CD4-positive, alpha-beta memory T cell (primary cell): ENCODE measurements at regions of chr9 and their contacts with region 1.

Region 1: DNA sequence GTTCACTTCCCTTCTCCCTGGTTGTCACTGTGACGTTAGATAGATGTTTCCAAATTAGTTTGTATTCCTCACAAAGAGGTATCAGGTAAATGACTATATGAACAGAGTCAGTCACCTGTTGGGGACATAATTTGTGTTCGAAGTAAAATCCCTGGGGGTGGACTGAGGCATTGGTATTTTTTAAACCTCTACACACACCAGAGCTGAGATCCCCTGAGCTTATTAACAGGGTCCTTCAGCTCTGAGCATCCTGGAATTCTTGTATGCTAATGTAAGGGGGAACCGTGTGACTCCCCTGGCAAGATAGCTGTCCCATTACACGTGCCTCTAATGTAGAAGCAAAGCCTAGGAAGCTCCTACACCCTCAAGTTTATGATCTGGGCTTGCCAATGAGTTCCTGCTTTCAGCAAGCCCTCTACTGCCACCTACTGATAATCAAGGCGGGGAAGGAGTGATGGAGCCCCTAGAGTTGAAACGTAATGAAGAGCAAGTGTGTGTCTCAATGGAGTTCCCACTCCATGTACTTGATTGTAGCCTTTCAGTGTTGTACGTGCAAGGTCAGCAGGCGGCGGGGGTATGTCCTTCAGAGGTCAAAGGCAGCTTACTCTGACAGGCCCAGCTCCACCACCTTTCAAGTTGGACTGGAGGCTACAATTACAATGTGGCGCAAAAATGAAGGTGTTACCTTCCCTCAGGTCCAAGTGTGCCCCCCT is 14.4 kb downstream of the PRKACG start:
- DNase-seq: peak; percentile 67 to 73 (median 71)
- H3K4me3 ChIP-seq: no peak overlapping the region
- H3K4me3 Mint-ChIP-seq: peak overlapping the region in 1 of 8 donors; percentile 18
- H3K27ac ChIP-seq: no peak overlapping the region
- H3K27ac Mint-ChIP-seq: peak overlapping the region in 1 of 7 donors; percentile 4
- H3K4me1 ChIP-seq: peaks cover 4% of the 10 kb centered on the region
- H3K4me1 Mint-ChIP-seq: peaks cover 6 to 19% (median 11%) of the 10 kb centered on the region in 4 donors
- H3K27me3 ChIP-seq: no peaks in the 10 kb centered on the region
- H3K27me3 Mint-ChIP-seq: peaks cover 0 to 2% of the 10 kb centered on the region in 2 donors

Region 2: DNA sequence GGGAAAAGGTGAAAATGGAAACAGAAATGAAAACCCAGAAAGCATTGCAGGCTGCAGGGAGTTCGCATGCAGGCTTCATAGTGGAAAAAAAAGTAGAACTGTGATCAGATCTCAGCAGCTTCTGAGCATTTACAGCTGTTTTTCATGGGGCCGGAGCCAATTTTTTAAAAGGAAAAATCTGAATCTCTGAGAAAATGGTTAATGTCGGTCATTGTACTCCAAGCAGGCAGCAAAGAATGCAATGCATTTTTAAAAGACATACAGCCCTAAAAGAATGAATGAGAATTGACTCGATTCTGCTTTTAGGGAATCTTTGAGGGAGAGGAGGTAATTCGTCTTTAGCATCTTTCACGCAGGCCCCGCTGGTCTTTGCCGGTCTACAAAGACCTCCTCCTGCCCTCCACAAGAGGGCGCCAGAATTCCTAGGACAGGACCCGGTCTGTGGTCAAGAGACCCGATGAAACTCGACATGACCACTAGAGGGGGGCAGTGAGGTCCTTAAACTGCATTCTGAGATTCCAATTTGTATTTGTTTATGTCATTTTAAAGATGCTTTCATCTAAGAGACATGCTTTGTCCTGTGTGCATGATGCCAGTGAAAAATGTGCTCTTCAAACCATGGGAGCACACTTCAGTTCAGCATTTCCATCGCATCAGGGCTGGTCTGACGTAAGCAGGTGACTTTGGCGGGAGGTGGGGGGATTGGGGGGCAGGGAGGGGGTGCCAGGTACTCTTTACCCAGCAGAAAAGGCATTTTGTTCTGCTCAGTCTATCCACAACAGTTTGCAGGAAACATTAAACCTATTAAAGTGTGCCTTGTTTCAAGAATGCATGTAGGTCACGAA is 415.1 kb before region 1 on chr9:
- CTCF ChIA-PET with region 1: interaction called, 60 read pairs
- POLR2A ChIA-PET with region 1: interaction called, 3 read pairs
- intact Hi-C with region 1: loop called (anchors 1 kb)
- DNase-seq: peak; percentile 78 to 83 (median 82)
- H3K4me3 ChIP-seq: no peak overlapping the region
- H3K4me3 Mint-ChIP-seq: no peak overlapping the region
- H3K27ac ChIP-seq: no peak overlapping the region
- H3K27ac Mint-ChIP-seq: no peak overlapping the region
- H3K4me1 ChIP-seq: no peaks in the 10 kb centered on the region
- H3K4me1 Mint-ChIP-seq: peaks cover 0 to 3% (median 0%) of the 10 kb centered on the region in 4 donors
- H3K27me3 ChIP-seq: no peaks in the 10 kb centered on the region
- H3K27me3 Mint-ChIP-seq: peaks cover 0 to 4% of the 10 kb centered on the region in 2 donors

Region 3: DNA sequence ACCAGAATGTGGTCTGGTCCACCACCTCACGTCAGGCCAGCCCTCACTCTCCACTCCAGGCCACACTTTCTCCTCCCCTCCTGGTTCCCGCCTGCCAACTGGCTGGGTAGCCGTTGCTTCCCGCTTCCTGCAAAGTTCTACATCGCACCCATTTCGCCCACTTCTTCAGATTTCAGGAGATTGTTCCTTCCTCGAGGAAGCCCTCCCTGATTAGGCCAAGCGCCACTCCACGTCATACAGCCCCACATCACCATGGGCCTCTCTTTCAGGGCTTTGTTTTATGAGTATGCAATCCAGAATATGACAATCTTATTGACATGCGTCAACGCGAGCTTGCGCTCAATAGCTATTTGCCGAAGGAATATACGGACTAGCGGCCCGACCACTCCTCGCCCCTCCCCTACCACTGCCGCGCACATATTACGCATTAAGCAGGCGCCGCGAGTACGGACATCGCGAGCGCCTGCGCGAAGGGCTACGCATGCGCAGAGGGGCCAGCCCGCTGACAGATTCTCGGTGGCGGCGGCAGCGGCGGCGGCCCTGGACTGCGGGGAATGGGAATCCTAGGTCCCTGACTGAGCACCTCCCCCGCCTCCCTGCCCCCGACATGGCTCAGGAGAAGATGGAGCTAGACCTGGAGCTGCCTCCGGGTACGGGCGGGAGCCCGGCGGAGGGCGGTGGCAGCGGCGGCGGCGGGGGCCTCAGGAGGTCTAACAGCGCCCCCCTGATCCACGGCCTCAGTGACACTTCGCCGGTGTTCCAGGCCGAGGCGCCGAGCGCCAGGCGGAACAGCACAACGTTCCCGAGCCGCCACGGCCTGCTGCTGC is 219.8 kb before region 1 on chr9:
- CTCF ChIA-PET with region 1: interaction called, 8 read pairs
- POLR2A ChIA-PET with region 1: interaction called, 6 read pairs
- intact Hi-C with region 1: loop called (anchors 1 kb)
- DNase-seq: peak; percentile 94 to 96 (median 94)
- H3K4me3 ChIP-seq: peak overlapping the region; percentile 92 to 100
- H3K4me3 Mint-ChIP-seq: no peak overlapping the region
- H3K27ac ChIP-seq: peak overlapping the region; percentile 85
- H3K27ac Mint-ChIP-seq: no peak overlapping the region
- H3K4me1 ChIP-seq: peaks cover 53% of the 10 kb centered on the region
- H3K4me1 Mint-ChIP-seq: peaks cover 3 to 7% (median 4%) of the 10 kb centered on the region in 4 donors
- H3K27me3 ChIP-seq: no peaks in the 10 kb centered on the region
- H3K27me3 Mint-ChIP-seq: peaks cover 4 to 5% of the 10 kb centered on the region in 2 donors

Region 4: GRCh38 chr9:68895741-68896478 is 103.6 kb before region 1 on chr9:
- CTCF ChIA-PET with region 1: interaction called, 6 read pairs
- POLR2A ChIA-PET with region 1: no interaction called
- intact Hi-C with region 1: loop called (anchors 2 kb)
- DNase-seq: peak in 4 of 5 donors; percentile 28 to 47 (median 39)
- H3K4me3 ChIP-seq: peak overlapping the region in 1 of 2 donors; percentile 10
- H3K4me3 Mint-ChIP-seq: peak overlapping the region; percentile 36 to 83 (median 59)
- H3K27ac ChIP-seq: no peak overlapping the region
- H3K27ac Mint-ChIP-seq: peak overlapping the region; percentile 6 to 92 (median 76)
- H3K4me1 ChIP-seq: peaks cover 34% of the 10 kb centered on the region
- H3K4me1 Mint-ChIP-seq: peaks cover 25 to 45% (median 34%) of the 10 kb centered on the region in 4 donors
- H3K27me3 ChIP-seq: no peaks in the 10 kb centered on the region
- H3K27me3 Mint-ChIP-seq: no peaks in the 10 kb centered on the region

Region 5: DNA sequence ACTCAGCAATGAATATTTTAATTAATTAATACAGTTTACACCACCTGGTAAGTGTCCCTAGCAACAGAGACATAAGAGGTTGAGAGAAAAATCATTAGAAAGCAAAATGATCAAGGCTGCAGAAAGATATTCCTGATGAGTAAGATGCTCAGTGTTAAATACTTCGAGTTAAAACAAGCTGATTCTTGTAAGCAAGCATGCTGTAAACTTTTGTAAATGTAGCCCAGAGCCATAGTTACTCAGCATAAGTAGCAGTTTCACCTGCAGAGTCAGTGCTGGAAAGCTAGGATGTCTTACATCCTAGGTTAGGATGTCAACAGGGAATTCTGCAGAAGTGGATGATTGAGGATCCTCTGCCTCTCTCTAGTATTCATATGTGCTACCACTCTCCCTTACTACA is 10.2 kb after region 1 on chr9:
- CTCF ChIA-PET with region 1: interaction called, 28 read pairs
- POLR2A ChIA-PET with region 1: no interaction called
- intact Hi-C with region 1: no loop called
- DNase-seq: no peak
- H3K4me3 ChIP-seq: no peak overlapping the region
- H3K4me3 Mint-ChIP-seq: no peak overlapping the region
- H3K27ac ChIP-seq: no peak overlapping the region
- H3K27ac Mint-ChIP-seq: no peak overlapping the region
- H3K4me1 ChIP-seq: peaks cover 6% of the 10 kb centered on the region
- H3K4me1 Mint-ChIP-seq: peaks cover 5 to 9% (median 7%) of the 10 kb centered on the region in 4 donors
- H3K27me3 ChIP-seq: no peaks in the 10 kb centered on the region
- H3K27me3 Mint-ChIP-seq: peaks cover 12 to 15% of the 10 kb centered on the region in 2 donors

Region 6: GRCh38 chr9:69019808-69020207 is 20.3 kb after region 1 on chr9:
- CTCF ChIA-PET with region 1: interaction called, 11 read pairs
- POLR2A ChIA-PET with region 1: interaction called, 8 read pairs
- intact Hi-C with region 1: no loop called
- DNase-seq: peak; percentile 62 to 72 (median 66)
- H3K4me3 ChIP-seq: no peak overlapping the region
- H3K4me3 Mint-ChIP-seq: peak overlapping the region in 7 of 8 donors; percentile 46 to 73 (median 56)
- H3K27ac ChIP-seq: peak overlapping the region; percentile 13
- H3K27ac Mint-ChIP-seq: peak overlapping the region; percentile 0 to 68 (median 26)
- H3K4me1 ChIP-seq: peaks cover 24% of the 10 kb centered on the region
- H3K4me1 Mint-ChIP-seq: peaks cover 17 to 35% (median 25%) of the 10 kb centered on the region in 4 donors
- H3K27me3 ChIP-seq: no peaks in the 10 kb centered on the region
- H3K27me3 Mint-ChIP-seq: peaks cover under 1 to 2% of the 10 kb centered on the region in 2 donors

Region 7: DNA sequence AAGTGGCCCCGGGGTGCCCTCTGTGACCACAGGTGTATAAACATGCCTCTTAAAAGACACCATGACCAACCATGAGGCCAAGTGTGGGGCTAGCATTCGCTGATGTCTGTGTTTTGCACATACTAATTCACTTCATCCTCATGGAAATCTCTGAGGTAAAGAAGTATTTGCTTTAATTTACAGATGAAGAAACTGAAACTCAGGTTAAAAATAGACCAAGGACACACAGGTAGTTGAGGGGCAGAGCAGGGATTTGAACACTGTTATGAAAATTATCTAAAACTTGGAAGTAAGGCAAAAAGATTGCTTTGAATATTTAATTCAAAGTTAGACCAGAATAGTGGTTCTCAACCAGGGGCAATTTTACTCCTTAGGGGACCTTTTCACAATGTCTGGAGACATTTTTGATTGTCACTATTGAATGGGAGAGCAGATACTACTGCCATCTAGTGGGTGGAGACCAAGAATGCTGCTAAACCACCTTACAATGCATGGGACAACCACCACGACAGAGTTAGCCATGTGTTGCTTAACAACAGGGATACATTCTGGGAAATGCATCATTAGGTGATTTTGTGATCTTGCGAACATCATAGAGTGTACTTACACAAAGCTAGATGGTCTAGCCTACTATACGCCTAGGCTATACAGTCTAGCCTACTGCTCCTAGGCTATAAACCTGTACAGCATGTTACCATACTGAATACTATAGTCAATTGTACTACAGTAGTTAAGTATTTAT is 28.0 kb after region 1 on chr9:
- CTCF ChIA-PET with region 1: interaction called, 11 read pairs
- POLR2A ChIA-PET with region 1: no interaction called
- intact Hi-C with region 1: loop called (anchors 1 kb)
- DNase-seq: peak in 4 of 5 donors; percentile 56 to 63 (median 58)
- H3K4me3 ChIP-seq: no peak overlapping the region
- H3K4me3 Mint-ChIP-seq: peak overlapping the region in 4 of 8 donors; percentile 3 to 64 (median 35)
- H3K27ac ChIP-seq: no peak overlapping the region
- H3K27ac Mint-ChIP-seq: peak overlapping the region in 5 of 7 donors; percentile 3 to 41 (median 18)
- H3K4me1 ChIP-seq: peaks cover 49% of the 10 kb centered on the region
- H3K4me1 Mint-ChIP-seq: peaks cover 27 to 55% (median 41%) of the 10 kb centered on the region in 4 donors
- H3K27me3 ChIP-seq: no peaks in the 10 kb centered on the region
- H3K27me3 Mint-ChIP-seq: no peaks in the 10 kb centered on the region